CD4-positive, alpha-beta memory T cell (primary cell): ENCODE measurements at regions of chr19 and their contacts with region 1.

Region 1: DNA sequence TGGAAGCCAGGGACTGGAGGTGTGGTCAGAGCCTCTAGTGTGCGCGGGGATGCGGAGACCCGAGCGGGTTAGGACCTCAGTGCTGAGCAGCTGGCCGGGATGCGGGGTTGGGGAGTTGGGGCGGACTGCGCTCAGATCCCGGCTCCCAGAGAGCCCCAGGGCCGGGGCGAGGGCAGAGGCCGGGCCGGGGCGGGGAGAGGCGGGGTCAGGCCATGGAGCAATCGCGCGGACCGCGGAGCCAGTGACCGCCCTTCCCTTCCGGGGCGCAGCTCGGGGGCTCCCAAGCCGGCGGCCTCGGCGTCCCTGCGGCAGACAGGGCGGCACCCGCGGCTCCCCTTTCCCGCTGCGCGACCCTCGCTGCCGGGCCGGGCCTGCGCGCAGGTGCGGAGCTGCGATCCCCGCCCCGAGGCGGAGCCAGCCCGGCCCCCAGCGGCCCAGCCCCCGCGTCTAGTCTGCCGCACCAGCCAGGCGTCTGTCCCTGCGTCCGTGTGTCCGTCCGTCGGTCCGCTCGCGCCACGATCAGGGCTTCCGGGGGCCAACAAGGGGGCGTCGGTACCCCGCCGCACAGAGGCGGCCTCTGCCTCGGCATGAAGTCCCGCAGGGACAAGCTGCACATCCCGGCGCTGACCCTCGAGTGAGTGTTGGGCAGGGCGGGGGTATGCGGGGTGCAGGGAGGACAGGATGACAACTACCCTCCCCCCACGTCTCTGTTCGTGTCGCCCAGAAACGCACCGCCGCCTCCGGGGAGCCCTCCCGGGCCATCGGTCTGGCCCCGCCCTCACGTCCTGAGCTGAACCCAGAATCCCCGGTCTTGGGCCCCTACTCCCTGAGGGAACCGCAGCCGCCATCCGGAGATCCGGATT is 12.4 kb downstream of the MAST3 start:
- DNase-seq: peak in 2 of 5 donors; percentile 32 to 33
- H3K4me3 ChIP-seq: peak overlapping the region; percentile 36 to 67
- H3K4me3 Mint-ChIP-seq: peak overlapping the region; percentile 74 to 89 (median 83)
- H3K27ac ChIP-seq: peak overlapping the region; percentile 61
- H3K27ac Mint-ChIP-seq: peak overlapping the region in 5 of 7 donors; percentile 63 to 94 (median 90)
- H3K4me1 ChIP-seq: peaks cover 20% of the 10 kb centered on the region
- H3K4me1 Mint-ChIP-seq: peaks cover 9 to 24% (median 16%) of the 10 kb centered on the region in 4 donors
- H3K27me3 ChIP-seq: no peaks in the 10 kb centered on the region
- H3K27me3 Mint-ChIP-seq: no peaks in the 10 kb centered on the region

Region 2: GRCh38 chr19:18091217-18091608 is 18.8 kb before region 1 on chr19:
- CTCF ChIA-PET with region 1: interaction called, 36 read pairs
- POLR2A ChIA-PET with region 1: interaction called, 159 read pairs
- intact Hi-C with region 1: loop called (anchors 2 kb)
- DNase-seq: peak; percentile 81 to 91 (median 83)
- H3K4me3 ChIP-seq: peak overlapping the region in 1 of 2 donors; percentile 16
- H3K4me3 Mint-ChIP-seq: peak overlapping the region in 7 of 8 donors; percentile 68 to 83 (median 75)
- H3K27ac ChIP-seq: peak overlapping the region; percentile 85
- H3K27ac Mint-ChIP-seq: peak overlapping the region; percentile 98 to 100 (median 99)
- H3K4me1 ChIP-seq: peaks cover 68% of the 10 kb centered on the region
- H3K4me1 Mint-ChIP-seq: peaks cover 39 to 76% (median 55%) of the 10 kb centered on the region in 4 donors
- H3K27me3 ChIP-seq: no peaks in the 10 kb centered on the region
- H3K27me3 Mint-ChIP-seq: no peaks in the 10 kb centered on the region

Region 3: GRCh38 chr19:18097217-18097992 is 12.6 kb before region 1 on chr19 and contains the start of gene MAST3:
- CTCF ChIA-PET with region 1: interaction called, 36 read pairs
- POLR2A ChIA-PET with region 1: interaction called, 159 read pairs
- intact Hi-C with region 1: loop called (anchors 2 kb)
- DNase-seq: peak; percentile 87 to 93 (median 93)
- H3K4me3 ChIP-seq: peak within 1 kb of the TSS; percentile 38 to 70
- H3K4me3 Mint-ChIP-seq: peak within 1 kb of the TSS; percentile 87 to 95 (median 89)
- H3K27ac ChIP-seq: peak within 1 kb of the TSS; percentile 68
- H3K27ac Mint-ChIP-seq: peak within 1 kb of the TSS; percentile 85 to 93 (median 89)
- H3K4me1 ChIP-seq: peaks cover 36% of the 10 kb centered on the region
- H3K4me1 Mint-ChIP-seq: peaks cover 22 to 50% (median 38%) of the 10 kb centered on the region in 4 donors
- H3K27me3 ChIP-seq: no peaks in the 10 kb centered on the region
- H3K27me3 Mint-ChIP-seq: no peaks in the 10 kb centered on the region
- total RNA-seq, gene MAST3: 51.6 to 53.9 TPM

Region 4: DNA sequence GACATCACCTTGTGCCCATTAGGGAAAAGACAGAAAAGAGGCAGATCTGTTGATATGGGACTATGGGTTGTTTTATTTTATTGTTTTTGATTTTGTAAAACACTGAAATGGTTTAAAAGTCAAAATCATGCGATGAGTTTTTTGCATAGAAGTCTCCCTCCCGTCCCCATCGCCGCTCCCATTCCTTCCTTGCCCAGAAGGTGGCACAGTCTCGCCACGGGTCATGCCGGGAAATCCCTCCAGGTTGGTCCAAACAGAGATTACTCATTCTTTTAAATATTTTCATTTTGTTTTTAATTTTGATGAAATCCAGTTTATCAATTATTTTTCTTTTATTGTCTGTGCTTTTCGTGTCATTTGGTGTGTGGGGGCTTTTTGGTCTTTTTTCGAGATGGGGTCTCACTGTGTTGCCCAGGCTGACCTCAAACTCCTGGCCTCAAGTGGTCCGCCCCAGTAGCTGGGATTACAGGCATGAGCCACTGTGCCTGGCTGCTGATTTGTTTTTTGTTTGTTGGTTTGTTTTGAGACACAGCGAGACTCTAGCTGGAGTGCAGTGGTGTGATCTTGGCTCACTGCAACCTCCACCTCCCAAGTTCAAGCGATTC is 239.7 kb after region 1 on chr19:
- CTCF ChIA-PET with region 1: no interaction called
- POLR2A ChIA-PET with region 1: no interaction called
- intact Hi-C with region 1: no loop called
- DNase-seq: no peak
- H3K4me3 ChIP-seq: no peak overlapping the region
- H3K4me3 Mint-ChIP-seq: no peak overlapping the region
- H3K27ac ChIP-seq: no peak overlapping the region
- H3K27ac Mint-ChIP-seq: no peak overlapping the region
- H3K4me1 ChIP-seq: no peaks in the 10 kb centered on the region
- H3K4me1 Mint-ChIP-seq: peaks cover 4 to 9% (median 7%) of the 10 kb centered on the region in 4 donors
- H3K27me3 ChIP-seq: no peaks in the 10 kb centered on the region
- H3K27me3 Mint-ChIP-seq: no peaks in the 10 kb centered on the region

Region 5: DNA sequence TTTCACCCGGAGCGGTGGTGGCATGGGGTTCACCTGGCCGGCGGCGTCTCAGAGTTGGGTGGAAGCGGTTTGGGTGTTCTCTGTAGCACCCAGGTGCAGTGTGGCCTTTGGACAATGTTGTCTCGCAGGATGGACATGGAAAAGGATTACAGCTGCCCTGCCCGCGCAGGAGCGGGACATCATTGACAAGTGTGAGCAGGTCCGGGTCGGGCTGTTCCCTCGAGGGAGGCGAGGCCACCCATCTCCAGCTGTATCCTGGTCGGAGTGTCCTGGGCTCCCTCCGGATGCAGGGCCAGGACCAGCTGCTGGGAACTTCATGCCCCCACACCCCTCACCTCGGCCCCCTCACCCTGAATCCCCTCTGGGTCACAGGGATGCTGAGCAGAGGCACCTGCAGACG is 1630.8 kb after region 1 on chr19:
- CTCF ChIA-PET with region 1: no interaction called
- POLR2A ChIA-PET with region 1: no interaction called
- intact Hi-C with region 1: no loop called
- DNase-seq: no peak
- H3K4me3 ChIP-seq: no peak overlapping the region
- H3K4me3 Mint-ChIP-seq: no peak overlapping the region
- H3K27ac ChIP-seq: no peak overlapping the region
- H3K27ac Mint-ChIP-seq: no peak overlapping the region
- H3K4me1 ChIP-seq: no peaks in the 10 kb centered on the region
- H3K4me1 Mint-ChIP-seq: no peaks in the 10 kb centered on the region
- H3K27me3 ChIP-seq: no peaks in the 10 kb centered on the region
- H3K27me3 Mint-ChIP-seq: peaks cover 0 to 1% of the 10 kb centered on the region in 2 donors